HCT116 (cell line): ENCODE measurements at regions of chr2 and their contacts with region 1.

Region 1: GRCh38 chr2:68943581-68944568 is 8.8 kb downstream of the GKN2 start:
- DNase-seq: peak; percentile 34
- ATAC-seq: peak; percentile 94
- H3K4me3 ChIP-seq: no peak overlapping the region
- H3K27ac ChIP-seq: no peak overlapping the region
- H3K4me1 ChIP-seq: peaks cover 0 to 4% of the 10 kb centered on the region in 2 experiments; a peak in 1 of 4 replicates
- H3K27me3 ChIP-seq: no peaks in the 10 kb centered on the region
- CTCF ChIP-seq: peak; percentile 73 to 78 (median 78)
- POLR2A ChIP-seq: no peak
- RAD21 ChIP-seq: peak; percentile 66

Region 2: DNA sequence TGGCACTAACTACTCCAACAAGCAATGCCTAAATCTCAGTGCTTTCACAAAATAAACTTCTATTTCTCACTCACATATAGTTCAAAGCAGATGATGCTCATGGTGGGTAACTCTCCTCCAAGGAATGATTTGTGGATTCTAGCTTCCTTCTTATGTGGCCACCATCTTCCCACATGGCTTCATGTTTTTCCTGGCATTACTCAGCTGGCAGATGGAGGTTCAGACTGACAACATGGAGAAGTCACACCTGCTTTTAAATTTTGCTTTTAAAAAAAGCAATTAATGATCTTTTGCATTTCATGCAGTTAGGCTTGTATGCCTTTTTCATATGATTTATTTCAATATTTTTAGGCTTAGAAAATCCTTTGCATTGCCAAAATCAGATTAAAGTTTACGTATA is 15.1 kb after region 1 on chr2:
- CTCF ChIA-PET with region 1: interaction called, 12 read pairs
- POLR2A ChIA-PET with region 1: no interaction called
- RAD21 ChIA-PET with region 1: no interaction called
- intact Hi-C with region 1: no loop called
- DNase-seq: no peak
- ATAC-seq: no peak
- H3K4me3 ChIP-seq: no peak overlapping the region
- H3K27ac ChIP-seq: no peak overlapping the region
- H3K4me1 ChIP-seq: no peaks in the 10 kb centered on the region
- H3K27me3 ChIP-seq: no peaks in the 10 kb centered on the region
- CTCF ChIP-seq: no peak
- POLR2A ChIP-seq: no peak
- RAD21 ChIP-seq: no peak

Region 3: GRCh38 chr2:69012310-69013141 is 68.7 kb after region 1 on chr2:
- CTCF ChIA-PET with region 1: interaction called, 3 read pairs
- POLR2A ChIA-PET with region 1: no interaction called
- RAD21 ChIA-PET with region 1: no interaction called
- intact Hi-C with region 1: loop called (anchors 2 kb)
- DNase-seq: peak; percentile 23
- ATAC-seq: peak; percentile 72
- H3K4me3 ChIP-seq: peak overlapping the region; percentile 79 to 88
- H3K27ac ChIP-seq: peak overlapping the region; percentile 51
- H3K4me1 ChIP-seq: peaks cover 10 to 16% of the 10 kb centered on the region in 2 experiments
- H3K27me3 ChIP-seq: no peaks in the 10 kb centered on the region
- CTCF ChIP-seq: peak; percentile 74 to 91 (median 78)
- POLR2A ChIP-seq: no peak
- RAD21 ChIP-seq: peak; percentile 79

Region 4: GRCh38 chr2:69138247-69138754 is 194.4 kb after region 1 on chr2:
- CTCF ChIA-PET with region 1: no interaction called
- POLR2A ChIA-PET with region 1: no interaction called
- RAD21 ChIA-PET with region 1: no interaction called
- intact Hi-C with region 1: no loop called
- DNase-seq: peak; percentile 15
- ATAC-seq: peak; percentile 73
- H3K4me3 ChIP-seq: peak overlapping the region in 1 of 2 experiments; percentile 44; a peak in 2 of 4 replicates
- H3K27ac ChIP-seq: peak overlapping the region; percentile 55; the same call in 1 of the 2 replicates
- H3K4me1 ChIP-seq: peaks cover 22 to 32% of the 10 kb centered on the region in 2 experiments
- H3K27me3 ChIP-seq: no peaks in the 10 kb centered on the region
- CTCF ChIP-seq: no peak
- POLR2A ChIP-seq: no peak
- RAD21 ChIP-seq: no peak